ENCODE measurements at regions of chr11 and their contacts with region 1.

Region 1: GRCh38 chr11:35126000-35126878 is 12.7 kb upstream of the CD44 start:
- DNase-seq: peak; percentile 81
- H3K4me3 Mint-ChIP-seq: peak overlapping the region; percentile 54
- H3K27ac Mint-ChIP-seq: peak overlapping the region; percentile 91
- H3K4me1 Mint-ChIP-seq: peaks cover 65% of the 10 kb centered on the region
- H3K27me3 Mint-ChIP-seq: no peaks in the 10 kb centered on the region

Region 2: DNA sequence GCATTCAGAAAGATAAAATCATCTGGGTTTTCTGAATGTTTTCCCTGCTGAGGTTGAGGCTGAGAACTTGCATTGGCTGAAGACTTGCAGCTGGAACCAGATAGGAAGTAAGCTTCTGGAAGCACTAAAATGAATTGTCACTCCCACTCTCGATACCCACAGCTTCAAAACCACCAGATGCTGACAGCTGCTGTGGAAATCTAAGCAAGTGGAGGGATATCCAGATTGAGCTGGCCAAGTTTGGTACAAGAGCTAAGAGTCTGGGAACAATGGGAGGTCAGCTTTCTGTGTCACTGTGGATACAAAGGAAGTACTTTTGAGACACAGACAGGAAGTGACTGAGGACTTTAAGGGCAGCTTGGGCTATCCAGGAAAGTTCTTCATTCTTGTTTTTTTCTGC is 38.6 kb before region 1 on chr11:
- CTCF ChIA-PET with region 1: interaction called, 3 read pairs
- intact Hi-C with region 1: loop called (anchors 1 kb)
- DNase-seq: peak; percentile 42
- H3K4me3 Mint-ChIP-seq: no peak overlapping the region
- H3K27ac Mint-ChIP-seq: peak overlapping the region; percentile 71
- H3K4me1 Mint-ChIP-seq: peaks cover 74% of the 10 kb centered on the region
- H3K27me3 Mint-ChIP-seq: no peaks in the 10 kb centered on the region

Region 3: GRCh38 chr11:35151241-35151640 is 25.0 kb after region 1 on chr11:
- CTCF ChIA-PET with region 1: no interaction called
- intact Hi-C with region 1: no loop called
- DNase-seq: no peak
- H3K4me3 Mint-ChIP-seq: no peak overlapping the region
- H3K27ac Mint-ChIP-seq: peak overlapping the region; percentile 82
- H3K4me1 Mint-ChIP-seq: peaks cover 96% of the 10 kb centered on the region
- H3K27me3 Mint-ChIP-seq: no peaks in the 10 kb centered on the region

Region 4: GRCh38 chr11:35177370-35177769 is 51.1 kb after region 1 on chr11:
- CTCF ChIA-PET with region 1: interaction called, 4 read pairs
- intact Hi-C with region 1: loop called (anchors 1 kb)
- DNase-seq: peak; percentile 56
- H3K4me3 Mint-ChIP-seq: no peak overlapping the region
- H3K27ac Mint-ChIP-seq: peak overlapping the region; percentile 77
- H3K4me1 Mint-ChIP-seq: peaks cover 90% of the 10 kb centered on the region
- H3K27me3 Mint-ChIP-seq: no peaks in the 10 kb centered on the region

Region 5: GRCh38 chr11:35237860-35238715 is 111.8 kb after region 1 on chr11:
- CTCF ChIA-PET with region 1: no interaction called
- intact Hi-C with region 1: loop called (anchors 2 kb)
- DNase-seq: peak; percentile 79
- H3K4me3 Mint-ChIP-seq: no peak overlapping the region
- H3K27ac Mint-ChIP-seq: peak overlapping the region; percentile 34
- H3K4me1 Mint-ChIP-seq: peaks cover 69% of the 10 kb centered on the region
- H3K27me3 Mint-ChIP-seq: no peaks in the 10 kb centered on the region

Measured in activated naive CD4-positive, alpha-beta T cell treated with anti-CD3 and anti-CD28 coated beads for 36 hours (primary cell).